Endothelial cell of umbilical vein (primary cell): ENCODE measurements at regions of chr18 and their contacts with region 1.

Region 1: DNA sequence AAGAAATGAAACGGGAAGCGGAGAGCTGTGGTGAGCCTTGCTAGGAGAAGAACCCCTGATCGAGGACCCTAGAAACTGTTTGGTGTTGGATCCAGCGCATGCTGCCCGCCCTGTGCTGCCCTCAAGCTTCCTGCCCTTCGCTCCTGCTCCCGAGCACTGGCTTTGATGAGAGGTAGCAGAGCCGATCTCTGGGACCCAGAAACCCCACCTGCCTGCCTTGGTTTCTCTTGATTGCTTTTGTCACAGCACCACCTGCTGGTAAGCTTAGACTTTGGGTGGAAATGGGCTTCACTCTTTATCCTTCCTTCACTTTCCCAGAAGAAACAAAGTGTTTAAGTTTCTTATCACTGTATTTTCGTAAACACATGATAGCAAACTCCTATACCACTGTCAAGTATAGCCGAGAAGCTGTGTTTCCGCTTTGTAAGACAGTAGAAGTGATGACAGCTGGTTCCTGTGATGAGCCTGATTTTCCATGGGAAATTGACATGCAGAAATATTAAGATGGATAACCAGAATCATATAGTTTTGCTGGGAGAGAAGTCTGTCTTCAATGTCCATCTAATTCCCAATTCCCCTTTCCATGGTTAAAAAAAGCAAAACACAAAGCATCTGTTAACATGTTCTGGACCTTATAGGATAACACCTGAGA is 267.4 kb downstream of the PHLPP1 start:
- DNase-seq: peak; percentile 65
- H3K4me3 ChIP-seq: no peak overlapping the region
- H3K27ac ChIP-seq: no peak overlapping the region
- H3K4me1 ChIP-seq: peaks cover under 1% of the 10 kb centered on the region
- H3K27me3 ChIP-seq: no peaks in the 10 kb centered on the region
- CTCF ChIP-seq: peak; percentile 72 to 75
- POLR2A ChIP-seq: no peak

Region 2: DNA sequence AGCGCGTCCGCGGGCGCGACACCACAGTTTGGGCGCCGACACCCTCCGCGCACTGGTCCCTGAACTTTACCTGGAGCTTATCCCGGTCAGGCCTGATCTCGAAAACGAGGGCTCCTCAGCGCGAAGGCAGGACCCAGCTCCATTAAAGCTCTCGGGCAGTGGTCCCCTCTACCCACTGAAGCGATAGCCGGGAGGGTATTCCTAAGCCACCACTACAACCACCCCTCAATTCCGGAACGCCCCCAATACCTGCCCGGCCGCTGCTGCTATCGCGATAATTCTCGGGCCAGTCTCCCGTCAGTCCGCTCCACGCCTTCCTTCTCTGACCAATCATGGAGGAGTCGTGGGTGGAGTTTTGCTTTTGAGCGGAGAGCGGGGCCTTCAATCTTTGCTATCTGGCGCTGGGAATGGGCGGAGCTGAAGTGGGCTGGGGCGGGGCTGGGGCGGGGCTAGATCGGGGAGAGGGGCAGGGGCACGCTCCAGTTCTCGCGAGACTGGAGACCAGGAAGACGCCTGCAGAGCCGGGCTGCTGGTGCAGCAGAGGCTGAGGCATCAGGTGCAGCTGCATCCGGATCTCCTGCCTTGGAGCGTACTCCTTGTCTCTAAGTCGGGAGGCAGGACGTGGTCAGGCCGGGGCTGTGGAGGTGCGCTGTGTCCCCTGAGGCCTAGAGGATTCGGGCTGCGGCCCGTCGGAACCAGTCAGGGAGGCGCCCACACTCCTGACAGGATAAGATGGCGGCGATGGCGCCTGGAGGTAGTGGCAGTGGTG is 795.8 kb before region 1 on chr18 and contains the starts of genes PIGN and RELCH:
- CTCF ChIA-PET with region 1: no interaction called
- POLR2A ChIA-PET with region 1: no interaction called
- dilution Hi-C with region 1: no loop called
- intact Hi-C with region 1: loop called (anchors 1 kb)
- DNase-seq: peak; percentile 99
- H3K4me3 ChIP-seq: peak within 1 kb of the TSS; percentile 86 to 97 (median 94)
- H3K27ac ChIP-seq: peak within 1 kb of the TSS; percentile 79
- H3K4me1 ChIP-seq: peaks cover 34% of the 10 kb centered on the region
- H3K27me3 ChIP-seq: no peaks in the 10 kb centered on the region
- CTCF ChIP-seq: no peak
- POLR2A ChIP-seq: peak; percentile 88
- total RNA-seq, gene PIGN: 26.1 and 31.1 TPM in 2 replicates
- total RNA-seq, gene RELCH: 20.7 and 25.2 TPM in 2 replicates

Region 3: DNA sequence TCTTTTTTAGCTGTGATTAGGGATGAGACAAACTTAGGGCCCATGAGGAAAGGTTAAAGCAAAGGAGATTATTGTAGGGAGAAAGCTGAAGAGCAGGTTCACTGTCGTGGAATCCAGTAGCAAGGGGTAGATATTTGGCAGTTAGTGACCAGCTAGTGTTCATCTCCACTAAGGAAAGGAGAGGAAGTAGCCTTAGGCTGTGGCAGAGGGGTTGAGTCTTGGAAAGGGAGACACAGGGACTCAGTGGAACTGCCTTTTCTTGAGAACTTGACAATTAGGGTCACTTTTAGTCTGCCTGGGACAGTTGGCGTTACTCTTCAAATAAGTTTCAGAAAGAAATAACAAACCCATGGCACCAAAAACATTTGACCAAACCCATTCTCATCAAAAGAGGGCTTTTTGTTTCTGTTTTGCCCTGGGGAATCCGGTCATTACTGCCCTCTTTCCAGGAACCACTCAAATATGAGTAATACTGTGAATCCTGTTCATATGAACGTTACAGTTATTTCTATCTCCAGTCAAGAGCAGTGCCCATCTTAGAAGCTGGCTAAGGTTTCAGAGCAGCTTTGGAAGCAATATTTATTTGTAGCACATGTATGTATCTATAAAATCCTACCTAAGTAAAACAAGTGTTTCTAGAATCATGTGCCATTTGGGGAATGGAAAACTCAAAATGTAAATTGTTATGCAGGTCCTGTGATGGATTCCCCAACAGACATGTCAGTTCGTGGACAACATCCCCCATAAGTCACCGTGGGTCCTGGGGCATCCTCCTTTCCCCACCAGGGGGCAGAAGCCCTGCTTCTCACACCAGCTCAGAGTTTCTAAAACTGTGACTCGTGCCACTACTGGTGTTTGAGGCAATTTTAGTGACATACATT is 344.7 kb before region 1 on chr18:
- CTCF ChIA-PET with region 1: interaction called, 67 read pairs
- POLR2A ChIA-PET with region 1: no interaction called
- dilution Hi-C with region 1: no loop called
- intact Hi-C with region 1: loop called (anchors 1 kb)
- DNase-seq: peak; percentile 18
- H3K4me3 ChIP-seq: no peak overlapping the region
- H3K27ac ChIP-seq: no peak overlapping the region
- H3K4me1 ChIP-seq: no peaks in the 10 kb centered on the region
- H3K27me3 ChIP-seq: peaks cover 3 to 5% of the 10 kb centered on the region in 2 experiments
- CTCF ChIP-seq: peak; percentile 54 to 71
- POLR2A ChIP-seq: no peak

Region 4: GRCh38 chr18:62881509-62882016 is 101.2 kb before region 1 on chr18:
- CTCF ChIA-PET with region 1: interaction called, 14 read pairs
- POLR2A ChIA-PET with region 1: no interaction called
- dilution Hi-C with region 1: no loop called
- intact Hi-C with region 1: no loop called
- DNase-seq: peak; percentile 77
- H3K4me3 ChIP-seq: no peak overlapping the region
- H3K27ac ChIP-seq: peak overlapping the region; percentile 38
- H3K4me1 ChIP-seq: peaks cover 59% of the 10 kb centered on the region
- H3K27me3 ChIP-seq: no peaks in the 10 kb centered on the region
- CTCF ChIP-seq: no peak
- POLR2A ChIP-seq: no peak

Region 5: DNA sequence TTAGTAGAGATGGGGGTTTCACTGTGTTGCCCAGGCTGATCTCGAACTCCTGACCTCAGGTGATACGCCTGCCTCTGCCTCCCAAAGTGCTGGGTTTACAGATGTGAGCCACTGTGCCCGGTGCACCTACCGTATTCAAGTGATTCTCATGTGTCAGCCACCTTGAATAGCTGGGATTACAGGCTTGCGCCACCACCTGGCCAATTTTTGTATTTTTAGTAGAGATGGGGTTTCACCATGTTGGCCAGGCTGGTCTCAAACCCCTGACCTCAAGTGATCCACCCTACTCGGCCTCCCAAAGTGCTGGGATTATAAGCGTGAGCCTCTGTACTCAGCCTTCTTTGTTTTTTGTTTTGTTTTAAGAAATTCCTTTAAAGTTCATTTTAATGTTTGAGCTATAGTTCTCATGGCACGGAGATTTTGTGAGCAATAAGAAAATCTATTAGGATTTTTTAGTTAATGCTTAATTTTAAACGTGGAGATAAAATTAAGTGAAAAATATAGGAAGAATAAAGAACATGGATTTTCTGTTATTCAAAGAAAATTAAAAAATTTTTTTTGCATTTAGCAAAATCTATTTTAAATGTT is 24.7 kb before region 1 on chr18:
- CTCF ChIA-PET with region 1: interaction called, 27 read pairs
- POLR2A ChIA-PET with region 1: no interaction called
- dilution Hi-C with region 1: no loop called
- intact Hi-C with region 1: no loop called
- DNase-seq: peak; percentile 60
- H3K4me3 ChIP-seq: no peak overlapping the region
- H3K27ac ChIP-seq: no peak overlapping the region
- H3K4me1 ChIP-seq: peaks cover 5% of the 10 kb centered on the region
- H3K27me3 ChIP-seq: no peaks in the 10 kb centered on the region
- CTCF ChIP-seq: peak; percentile 31 to 42
- POLR2A ChIP-seq: no peak

Region 6: GRCh38 chr18:62963507-62963906 is 19.2 kb before region 1 on chr18:
- CTCF ChIA-PET with region 1: interaction called, 27 read pairs
- POLR2A ChIA-PET with region 1: no interaction called
- dilution Hi-C with region 1: no loop called
- intact Hi-C with region 1: no loop called
- DNase-seq: no peak
- H3K4me3 ChIP-seq: no peak overlapping the region
- H3K27ac ChIP-seq: no peak overlapping the region
- H3K4me1 ChIP-seq: no peaks in the 10 kb centered on the region
- H3K27me3 ChIP-seq: no peaks in the 10 kb centered on the region
- CTCF ChIP-seq: no peak
- POLR2A ChIP-seq: no peak